ENCODE measurements at regions of chr7 and their contacts with region 1.

Region 1: DNA sequence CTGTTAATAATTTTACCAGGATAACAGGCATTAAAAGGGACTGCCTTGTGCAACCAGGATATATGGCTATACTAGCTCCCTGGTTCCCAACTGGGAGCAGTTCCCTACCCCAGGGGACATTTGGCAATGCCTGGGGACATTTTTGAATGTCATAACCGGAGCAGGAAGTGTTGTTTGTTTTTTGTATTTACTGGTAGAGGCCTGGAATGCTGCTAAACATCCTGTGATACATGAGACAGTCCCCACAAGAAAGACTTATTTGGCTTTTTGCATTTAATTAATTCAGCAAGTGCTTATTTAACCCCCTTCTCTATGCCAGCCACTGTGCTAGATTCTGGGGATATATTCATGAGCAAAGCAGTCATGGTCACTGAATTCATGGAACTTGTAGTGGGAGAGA is 181.2 kb downstream of the BBS9 start:
- DNase-seq: no peak
- ATAC-seq: no peak
- H3K4me3 ChIP-seq: no peak overlapping the region
- H3K27ac ChIP-seq: no peak overlapping the region
- H3K4me1 ChIP-seq: no peaks in the 10 kb centered on the region
- H3K27me3 ChIP-seq: no peaks in the 10 kb centered on the region
- CTCF ChIP-seq: no peak

Region 2: GRCh38 chr7:33351709-33352108 is 41.2 kb after region 1 on chr7:
- intact Hi-C with region 1: loop called in 1 of 10 experiments (anchors 1 kb)
- DNase-seq: no peak
- ATAC-seq: no peak
- H3K4me3 ChIP-seq: no peak overlapping the region
- H3K27ac ChIP-seq: no peak overlapping the region
- H3K4me1 ChIP-seq: no peaks in the 10 kb centered on the region
- H3K27me3 ChIP-seq: no peaks in the 10 kb centered on the region
- CTCF ChIP-seq: no peak

Measured in heart right ventricle (tissue), 16 donors.